GM12878 (cell line): ENCODE measurements at regions of chr2 and their contacts with region 1.

Region 1: DNA sequence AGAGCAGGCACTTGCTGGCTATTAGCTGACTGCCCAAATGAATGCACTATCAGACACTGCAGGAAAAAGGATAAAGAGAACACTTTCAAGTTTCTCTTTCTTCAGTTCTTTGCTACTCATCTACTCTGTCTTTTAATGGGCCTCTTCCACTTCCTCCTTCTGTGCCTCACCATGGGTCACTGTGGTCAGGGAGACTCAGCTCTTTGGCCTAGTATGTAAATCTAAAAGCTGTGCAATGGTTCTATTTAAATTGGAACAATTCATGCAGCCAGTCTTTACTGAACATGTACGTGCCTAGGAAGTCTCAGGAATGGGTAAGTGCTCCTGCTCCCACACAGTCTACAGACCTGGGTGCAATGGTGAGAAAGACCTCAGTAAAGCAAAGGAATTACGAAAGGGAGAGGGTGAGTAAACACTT is 79.1 kb upstream of the DNMT3A start:
- DNase-seq: peak; percentile 93
- ATAC-seq: peak; percentile 64
- H3K4me3 ChIP-seq: peak overlapping the region; percentile 75
- H3K27ac ChIP-seq: peak overlapping the region; percentile 98
- H3K4me1 ChIP-seq: peaks cover 35% of the 10 kb centered on the region
- H3K27me3 ChIP-seq: no peaks in the 10 kb centered on the region
- CTCF ChIP-seq: no peak
- EP300 ChIP-seq: peak; percentile 82 to 95
- POLR2A ChIP-seq: peak; percentile 72
- RAD21 ChIP-seq: 0 out of 2 replicates have a peak, but pooled peaks have one; percentile 12

Region 2: DNA sequence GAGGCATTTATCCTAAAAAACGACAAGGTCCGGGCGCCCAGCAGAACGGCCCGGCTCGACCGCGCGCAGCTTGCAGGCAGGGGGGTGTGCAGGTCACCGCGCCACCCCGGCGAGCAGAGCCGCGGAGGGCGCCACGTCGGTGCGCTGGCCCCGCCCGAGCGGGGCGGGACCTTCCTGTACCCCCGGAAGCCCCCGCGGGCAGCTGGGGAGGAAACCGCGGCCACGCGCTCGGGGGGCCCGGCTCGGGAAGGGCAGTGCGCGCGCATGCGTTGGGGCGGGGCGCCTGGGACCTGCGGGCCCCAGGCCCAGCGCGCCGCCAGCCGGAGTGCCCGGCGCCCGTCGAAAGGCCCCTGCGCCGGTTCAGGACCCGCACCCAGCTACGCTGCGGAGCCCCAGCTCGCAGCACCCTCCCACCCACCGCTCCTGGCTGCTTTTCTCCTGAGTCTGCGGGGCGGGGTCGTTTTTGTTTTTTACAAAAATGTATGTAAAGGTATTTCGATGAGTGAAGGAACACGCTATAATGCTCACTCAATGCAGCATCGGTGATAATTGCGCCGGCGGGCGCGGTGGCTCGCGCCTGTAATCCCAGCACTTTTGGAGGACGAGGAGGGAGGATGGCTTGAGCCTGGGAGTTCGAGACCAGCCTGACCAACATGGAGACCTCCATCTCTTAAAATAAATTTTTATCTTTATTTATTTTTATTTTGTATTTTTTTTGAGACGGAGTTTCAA is 204.7 kb before region 1 on chr2:
- CTCF ChIA-PET with region 1: no interaction called
- POLR2A ChIA-PET with region 1: no interaction called
- RAD21 ChIA-PET with region 1: no interaction called
- SMC1A ChIA-PET with region 1: interaction called, 4 read pairs
- in situ Hi-C with region 1: no loop called
- intact Hi-C with region 1: loop called (anchors 5 kb)
- DNase-seq: no peak
- ATAC-seq: peak; percentile 89
- H3K4me3 ChIP-seq: peak overlapping the region; percentile 65; the same call in 1 of the 2 replicates
- H3K27ac ChIP-seq: peak overlapping the region; percentile 29; the same call in 1 of the 2 replicates
- H3K4me1 ChIP-seq: peaks cover under 1% of the 10 kb centered on the region
- H3K27me3 ChIP-seq: no peaks in the 10 kb centered on the region
- CTCF ChIP-seq: no peak
- EP300 ChIP-seq: no peak
- POLR2A ChIP-seq: peak; percentile 83
- RAD21 ChIP-seq: no peak

Region 3: DNA sequence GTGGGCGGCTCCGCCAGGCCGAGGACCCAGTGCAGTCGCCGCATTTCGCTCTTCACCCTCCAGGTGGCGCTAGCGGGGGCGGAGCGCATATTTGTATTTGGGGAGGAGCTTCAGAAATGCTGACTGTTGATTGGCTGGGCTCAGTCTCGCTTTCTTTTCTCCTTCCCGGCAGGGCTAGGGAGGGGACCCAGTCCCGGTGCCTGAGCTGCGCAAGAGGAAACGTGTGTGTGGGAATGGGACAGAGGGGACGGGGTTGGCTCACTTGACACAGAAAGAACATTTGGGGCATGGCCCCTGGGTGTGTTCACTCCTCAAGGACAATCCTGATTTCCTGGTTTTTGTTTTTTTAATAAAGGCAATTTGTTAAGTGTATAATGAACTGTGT is 58.8 kb before region 1 on chr2:
- CTCF ChIA-PET with region 1: interaction called, 39 read pairs
- POLR2A ChIA-PET with region 1: interaction called, 37 read pairs
- RAD21 ChIA-PET with region 1: interaction called, 59 read pairs
- SMC1A ChIA-PET with region 1: interaction called, 39 read pairs
- in situ Hi-C with region 1: no loop called
- intact Hi-C with region 1: loop called (anchors 1 kb)
- DNase-seq: peak; percentile 88
- ATAC-seq: peak; percentile 92
- H3K4me3 ChIP-seq: peak overlapping the region; percentile 72
- H3K27ac ChIP-seq: peak overlapping the region; percentile 84
- H3K4me1 ChIP-seq: peaks cover 13% of the 10 kb centered on the region
- H3K27me3 ChIP-seq: no peaks in the 10 kb centered on the region
- CTCF ChIP-seq: peak; percentile 93 to 99 (median 95)
- EP300 ChIP-seq: no peak; a peak in 1 of 4 replicates
- POLR2A ChIP-seq: peak; percentile 87
- RAD21 ChIP-seq: peak; percentile 37; the same call in 1 of the 2 replicates

Region 4: DNA sequence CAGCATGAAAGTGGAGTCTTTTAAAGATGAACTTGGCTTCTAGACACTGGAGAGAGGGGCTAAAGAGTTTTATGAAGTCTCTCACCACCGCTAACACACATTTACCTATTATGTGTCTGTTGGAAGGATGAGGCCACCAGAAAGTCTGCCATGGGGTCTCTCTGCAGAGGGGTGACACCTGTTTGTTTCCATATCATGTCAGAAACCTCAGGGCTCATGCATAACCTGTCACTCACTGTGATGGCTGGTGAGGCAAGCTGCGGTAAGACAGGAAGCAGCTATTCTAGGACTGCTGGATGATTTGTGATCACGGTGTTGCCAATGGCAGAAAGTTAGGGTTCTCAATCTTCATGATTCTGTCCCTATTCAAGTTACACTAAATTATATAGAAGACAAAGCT is 18.4 kb before region 1 on chr2:
- CTCF ChIA-PET with region 1: interaction called, 105 read pairs
- POLR2A ChIA-PET with region 1: interaction called, 192 read pairs
- RAD21 ChIA-PET with region 1: interaction called, 189 read pairs
- SMC1A ChIA-PET with region 1: interaction called, 245 read pairs
- in situ Hi-C with region 1: no loop called
- intact Hi-C with region 1: loop called (anchors 1 kb)
- DNase-seq: no peak
- ATAC-seq: peak; percentile 57
- H3K4me3 ChIP-seq: peak overlapping the region; percentile 35; the same call in 1 of the 2 replicates
- H3K27ac ChIP-seq: peak overlapping the region; percentile 97
- H3K4me1 ChIP-seq: peaks cover 58% of the 10 kb centered on the region
- H3K27me3 ChIP-seq: no peaks in the 10 kb centered on the region
- CTCF ChIP-seq: no peak
- EP300 ChIP-seq: peak in 1 of 2 experiments; percentile 74; a peak in 2 of 4 replicates
- POLR2A ChIP-seq: peak; percentile 32; the same call in 1 of the 2 replicates
- RAD21 ChIP-seq: no peak

Region 5: DNA sequence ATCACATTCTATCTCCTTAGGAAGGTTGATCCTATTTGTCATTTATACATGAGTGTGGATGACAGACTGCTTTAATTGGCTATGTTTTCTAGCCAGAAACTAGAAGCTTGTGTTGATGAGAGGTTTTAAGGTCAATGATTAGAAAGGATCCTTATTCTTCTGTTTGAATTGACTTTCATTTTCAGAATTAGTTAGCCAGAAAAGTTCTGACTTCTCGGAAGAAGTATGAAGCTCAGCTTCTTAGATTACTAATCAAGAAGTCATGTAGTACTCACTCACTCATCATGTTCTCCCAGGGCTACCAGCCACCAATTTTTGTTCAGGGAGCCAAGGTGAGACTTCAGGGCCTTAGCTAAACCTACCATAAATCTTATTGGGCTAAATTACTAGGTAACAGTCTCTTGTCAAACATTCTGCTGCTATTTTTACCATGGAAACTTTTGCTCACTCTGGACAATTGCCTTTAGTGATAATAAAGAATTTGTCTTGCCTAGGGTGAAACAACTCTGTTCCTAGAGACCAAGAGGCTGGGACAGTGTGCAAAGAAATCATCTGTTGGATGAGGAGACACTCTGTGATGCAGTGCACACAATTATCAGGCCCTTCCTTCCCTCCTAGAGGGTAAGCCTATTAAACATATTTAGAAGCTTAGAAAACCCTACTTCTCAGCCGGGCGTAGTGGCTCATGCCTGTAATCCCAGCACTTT is 32.5 kb after region 1 on chr2:
- CTCF ChIA-PET with region 1: interaction called, 9 read pairs
- POLR2A ChIA-PET with region 1: interaction called, 24 read pairs
- RAD21 ChIA-PET with region 1: interaction called, 34 read pairs
- SMC1A ChIA-PET with region 1: interaction called, 21 read pairs
- in situ Hi-C with region 1: no loop called
- intact Hi-C with region 1: loop called (anchors 2 kb)
- DNase-seq: peak; percentile 69
- ATAC-seq: peak; percentile 96
- H3K4me3 ChIP-seq: no peak overlapping the region
- H3K27ac ChIP-seq: peak overlapping the region; percentile 94
- H3K4me1 ChIP-seq: peaks cover 18% of the 10 kb centered on the region
- H3K27me3 ChIP-seq: no peaks in the 10 kb centered on the region
- CTCF ChIP-seq: no peak
- EP300 ChIP-seq: no peak
- POLR2A ChIP-seq: no peak
- RAD21 ChIP-seq: no peak

Region 6: GRCh38 chr2:25521665-25522387 is 101.0 kb after region 1 on chr2:
- CTCF ChIA-PET with region 1: interaction called, 6 read pairs
- POLR2A ChIA-PET with region 1: interaction called, 3 read pairs
- RAD21 ChIA-PET with region 1: interaction called, 17 read pairs
- SMC1A ChIA-PET with region 1: interaction called, 8 read pairs
- in situ Hi-C with region 1: no loop called
- intact Hi-C with region 1: loop called (anchors 1 kb)
- DNase-seq: peak; percentile 90
- ATAC-seq: peak; percentile 94
- H3K4me3 ChIP-seq: no peak overlapping the region
- H3K27ac ChIP-seq: peak overlapping the region; percentile 67
- H3K4me1 ChIP-seq: peaks cover 6% of the 10 kb centered on the region; the same call in 1 of the 2 replicates
- H3K27me3 ChIP-seq: no peaks in the 10 kb centered on the region
- CTCF ChIP-seq: peak; percentile 75 to 86 (median 81)
- EP300 ChIP-seq: 0 out of 4 replicates have a peak, but pooled peaks of 1 of the 2 experiments have one; percentile 12
- POLR2A ChIP-seq: no peak
- RAD21 ChIP-seq: peak; percentile 99